Activated CD4-positive, alpha-beta memory T cell treated with anti-CD3 and anti-CD28 coated beads for 36 hours (primary cell): ENCODE measurements at regions of chr16 and their contacts with region 1.

Region 1: GRCh38 chr16:81366316-81366932 is 51.7 kb downstream of the GAN start:
- DNase-seq: no peak
- H3K4me3 Mint-ChIP-seq: no peak overlapping the region
- H3K27ac Mint-ChIP-seq: no peak overlapping the region
- H3K4me1 Mint-ChIP-seq: no peaks in the 10 kb centered on the region
- H3K27me3 Mint-ChIP-seq: no peaks in the 10 kb centered on the region

Region 2: GRCh38 chr16:81261049-81261648 is 105.3 kb before region 1 on chr16:
- CTCF ChIA-PET with region 1: interaction called, 11 read pairs
- POLR2A ChIA-PET with region 1: no interaction called
- intact Hi-C with region 1: no loop called
- DNase-seq: peak; percentile 49
- H3K4me3 Mint-ChIP-seq: no peak overlapping the region
- H3K27ac Mint-ChIP-seq: no peak overlapping the region
- H3K4me1 Mint-ChIP-seq: no peaks in the 10 kb centered on the region
- H3K27me3 Mint-ChIP-seq: peaks cover 10% of the 10 kb centered on the region

Region 3: GRCh38 chr16:81293909-81294823 is 72.3 kb before region 1 on chr16:
- CTCF ChIA-PET with region 1: no interaction called
- POLR2A ChIA-PET with region 1: no interaction called
- intact Hi-C with region 1: no loop called
- DNase-seq: no peak
- H3K4me3 Mint-ChIP-seq: no peak overlapping the region
- H3K27ac Mint-ChIP-seq: no peak overlapping the region
- H3K4me1 Mint-ChIP-seq: peaks cover 5% of the 10 kb centered on the region
- H3K27me3 Mint-ChIP-seq: peaks cover 18% of the 10 kb centered on the region

Region 4: GRCh38 chr16:81531419-81531821 is 165.0 kb after region 1 on chr16:
- CTCF ChIA-PET with region 1: no interaction called
- POLR2A ChIA-PET with region 1: no interaction called
- intact Hi-C with region 1: no loop called
- DNase-seq: no peak
- H3K4me3 Mint-ChIP-seq: no peak overlapping the region
- H3K27ac Mint-ChIP-seq: no peak overlapping the region
- H3K4me1 Mint-ChIP-seq: peaks cover 11% of the 10 kb centered on the region
- H3K27me3 Mint-ChIP-seq: no peaks in the 10 kb centered on the region

Region 5: GRCh38 chr16:81723098-81723723 is 356.8 kb after region 1 on chr16:
- CTCF ChIA-PET with region 1: interaction called, 15 read pairs
- POLR2A ChIA-PET with region 1: no interaction called
- intact Hi-C with region 1: loop called (anchors 1 kb)
- DNase-seq: peak; percentile 33
- H3K4me3 Mint-ChIP-seq: no peak overlapping the region
- H3K27ac Mint-ChIP-seq: peak overlapping the region; percentile 60
- H3K4me1 Mint-ChIP-seq: peaks cover 13% of the 10 kb centered on the region
- H3K27me3 Mint-ChIP-seq: no peaks in the 10 kb centered on the region

Region 6: DNA sequence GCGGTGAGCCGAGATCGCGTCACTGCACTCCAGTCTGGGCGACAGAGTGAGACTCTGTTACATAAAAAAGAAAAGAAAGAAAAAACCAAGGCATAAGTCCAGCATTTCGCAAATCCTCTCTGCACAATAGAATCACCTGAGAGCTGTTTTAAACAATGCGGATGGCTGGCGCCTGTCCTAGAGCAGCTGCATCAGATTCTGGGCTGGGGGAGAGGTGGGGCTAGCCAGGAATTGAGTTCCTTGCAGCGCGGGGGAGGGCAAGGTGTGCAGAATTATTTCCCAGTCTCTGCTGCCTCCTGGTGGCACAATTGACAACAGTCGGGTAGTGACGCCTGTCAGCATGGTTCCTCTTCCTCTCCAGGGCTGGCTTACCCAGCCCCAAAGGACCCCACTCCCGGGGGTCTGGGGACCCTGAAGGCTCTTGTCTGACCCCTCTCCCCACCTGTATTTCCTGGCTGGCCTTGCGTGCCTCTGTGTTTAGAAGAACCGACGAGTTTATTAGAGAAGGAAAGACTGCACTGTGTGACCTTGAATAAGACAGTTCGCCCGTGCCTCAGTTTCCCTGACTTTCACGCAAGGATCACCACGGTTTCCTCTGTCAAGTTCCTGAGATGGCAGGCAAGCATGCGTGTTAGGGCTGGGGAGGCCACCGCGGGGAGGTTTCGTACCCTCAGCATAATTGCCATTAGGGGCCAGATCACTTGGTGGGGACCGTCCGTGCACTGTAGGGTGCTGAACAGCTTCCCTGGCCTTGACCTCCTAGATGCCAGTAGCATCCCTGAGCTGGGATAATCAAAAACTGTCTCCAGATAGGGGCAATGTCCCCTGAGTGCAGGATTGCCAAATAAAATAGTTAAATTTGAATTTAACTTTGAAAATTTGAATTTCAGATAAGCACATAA is 371.7 kb after region 1 on chr16:
- CTCF ChIA-PET with region 1: interaction called, 6 read pairs
- POLR2A ChIA-PET with region 1: no interaction called
- intact Hi-C with region 1: loop called (anchors 1 kb)
- DNase-seq: peak; percentile 93
- H3K4me3 Mint-ChIP-seq: peak overlapping the region; percentile 53
- H3K27ac Mint-ChIP-seq: peak overlapping the region; percentile 7
- H3K4me1 Mint-ChIP-seq: peaks cover 8% of the 10 kb centered on the region
- H3K27me3 Mint-ChIP-seq: no peaks in the 10 kb centered on the region